Kidney (tissue), 22 donors: ENCODE measurements at regions of chr7 and their contacts with region 1.

Region 1: GRCh38 chr7:131040467-131040932 is 287.2 kb upstream of the MKLN1 start:
- DNase-seq: peak in 4 of 5 donors; percentile 50 to 84 (median 67)
- H3K4me3 ChIP-seq: no peak overlapping the region
- H3K27ac ChIP-seq: peak overlapping the region in 1 of 2 donors; percentile 9
- H3K4me1 ChIP-seq: peaks cover 0 to 7% (median 3%) of the 10 kb centered on the region in 3 donors
- H3K27me3 ChIP-seq: no peaks in the 10 kb centered on the region
- CTCF ChIP-seq: peak; percentile 93

Region 2: GRCh38 chr7:130896898-130897514 is 143.5 kb before region 1 on chr7:
- intact Hi-C with region 1: loop called (anchors 10 kb)
- DNase-seq: peak; percentile 83 to 92 (median 85)
- H3K4me3 ChIP-seq: peak overlapping the region in 2 of 3 donors; percentile 59 to 66
- H3K27ac ChIP-seq: peak overlapping the region; percentile 78 to 95
- H3K4me1 ChIP-seq: peaks cover 3 to 69% (median 54%) of the 10 kb centered on the region in 3 donors
- H3K27me3 ChIP-seq: no peaks in the 10 kb centered on the region
- CTCF ChIP-seq: peak; percentile 92